ENCODE measurements at regions of chr17 and their contacts with region 1.

Region 1: DNA sequence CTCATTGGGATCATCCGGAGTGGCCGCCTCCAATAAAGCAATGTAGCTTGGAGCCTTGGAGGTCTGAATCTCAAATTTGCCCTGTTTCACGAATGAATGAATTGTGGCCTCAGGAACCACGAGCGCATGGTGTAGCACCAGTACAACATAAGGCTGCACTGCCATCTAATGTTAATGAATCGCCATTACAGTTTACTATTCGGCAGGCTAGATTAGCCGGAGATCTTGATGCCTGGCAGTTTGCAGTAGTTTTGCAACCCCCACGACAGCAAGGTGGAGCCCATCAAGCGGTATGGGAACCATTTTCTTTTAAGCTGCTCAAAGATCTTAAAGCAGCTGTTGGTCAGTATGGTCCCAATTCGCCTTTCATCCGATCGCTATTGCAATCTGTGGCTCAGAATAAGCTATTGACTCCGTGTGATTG is 18.8 kb downstream of the ALOX15B start:
- DNase-seq: peak; percentile 63
- ATAC-seq: peak; percentile 89
- H3K4me3 Mint-ChIP-seq: no peak overlapping the region
- H3K27ac Mint-ChIP-seq: no peak overlapping the region
- H3K4me1 Mint-ChIP-seq: peaks cover 4% of the 10 kb centered on the region
- H3K27me3 Mint-ChIP-seq: peaks cover 47% of the 10 kb centered on the region

Region 2: GRCh38 chr17:7745748-7746470 is 311.8 kb before region 1 on chr17:
- CTCF ChIA-PET with region 1: interaction called, 12 read pairs
- POLR2A ChIA-PET with region 1: no interaction called
- intact Hi-C with region 1: loop called (anchors 1 kb)
- DNase-seq: no peak
- ATAC-seq: no peak
- H3K4me3 Mint-ChIP-seq: no peak overlapping the region
- H3K27ac Mint-ChIP-seq: no peak overlapping the region
- H3K4me1 Mint-ChIP-seq: no peaks in the 10 kb centered on the region
- H3K27me3 Mint-ChIP-seq: peaks cover 3% of the 10 kb centered on the region

Region 3: DNA sequence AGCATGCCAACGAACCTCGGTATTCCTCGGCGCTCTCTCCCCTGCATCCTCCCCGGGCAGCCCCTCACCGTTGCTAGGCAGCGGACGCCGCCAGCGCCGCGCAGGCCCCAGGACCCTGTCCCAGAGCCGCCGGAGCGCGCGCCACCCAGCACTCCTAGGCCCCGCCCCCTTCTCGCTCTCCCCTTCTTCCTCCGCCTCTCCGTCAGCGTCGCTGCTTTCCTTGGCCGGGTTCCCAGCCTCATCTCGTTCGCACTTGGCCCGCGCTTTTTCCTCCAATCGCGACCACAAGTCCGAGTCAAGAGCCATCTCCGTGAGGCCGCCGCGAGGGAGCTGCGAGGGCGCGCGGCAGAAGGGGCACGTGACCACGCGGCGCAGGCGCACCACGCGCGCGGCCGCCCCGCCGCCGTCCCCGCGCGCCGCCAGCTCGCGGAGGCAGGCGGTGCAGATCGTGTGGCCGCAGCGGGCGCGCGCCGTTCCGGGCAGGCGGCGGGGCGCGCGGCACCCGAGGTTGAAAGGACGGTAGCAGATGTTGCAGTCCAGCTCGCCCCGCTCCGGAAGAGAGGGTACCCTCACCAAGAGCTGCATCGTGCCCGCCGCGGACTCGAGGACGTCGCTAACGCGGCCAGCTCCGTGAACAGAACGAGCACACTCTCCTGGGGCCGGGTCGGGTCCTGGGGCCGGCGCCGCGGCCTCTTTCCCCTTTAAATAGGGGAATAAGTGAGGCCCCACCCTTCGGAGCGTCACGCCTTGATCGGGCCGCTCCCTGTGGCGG is 141.9 kb before region 1 on chr17 and contains the start of gene RNF227:
- CTCF ChIA-PET with region 1: interaction called, 19 read pairs
- POLR2A ChIA-PET with region 1: no interaction called
- intact Hi-C with region 1: loop called (anchors 1 to 2 kb)
- DNase-seq: peak; percentile 95
- ATAC-seq: peak; percentile 88
- H3K4me3 Mint-ChIP-seq: peak within 1 kb of the TSS; percentile 86
- H3K27ac Mint-ChIP-seq: peak within 1 kb of the TSS; percentile 82
- H3K4me1 Mint-ChIP-seq: peaks cover 27% of the 10 kb centered on the region
- H3K27me3 Mint-ChIP-seq: no peaks in the 10 kb centered on the region
- total RNA-seq, gene RNF227: 3.8 to 5.6 TPM

Region 4: GRCh38 chr17:8041249-8041928 is 16.3 kb before region 1 on chr17:
- CTCF ChIA-PET with region 1: interaction called, 34 read pairs
- POLR2A ChIA-PET with region 1: no interaction called
- intact Hi-C with region 1: no loop called
- DNase-seq: peak; percentile 72
- ATAC-seq: peak; percentile 84
- H3K4me3 Mint-ChIP-seq: no peak overlapping the region
- H3K27ac Mint-ChIP-seq: no peak overlapping the region
- H3K4me1 Mint-ChIP-seq: no peaks in the 10 kb centered on the region
- H3K27me3 Mint-ChIP-seq: peaks cover 25% of the 10 kb centered on the region

Region 5: DNA sequence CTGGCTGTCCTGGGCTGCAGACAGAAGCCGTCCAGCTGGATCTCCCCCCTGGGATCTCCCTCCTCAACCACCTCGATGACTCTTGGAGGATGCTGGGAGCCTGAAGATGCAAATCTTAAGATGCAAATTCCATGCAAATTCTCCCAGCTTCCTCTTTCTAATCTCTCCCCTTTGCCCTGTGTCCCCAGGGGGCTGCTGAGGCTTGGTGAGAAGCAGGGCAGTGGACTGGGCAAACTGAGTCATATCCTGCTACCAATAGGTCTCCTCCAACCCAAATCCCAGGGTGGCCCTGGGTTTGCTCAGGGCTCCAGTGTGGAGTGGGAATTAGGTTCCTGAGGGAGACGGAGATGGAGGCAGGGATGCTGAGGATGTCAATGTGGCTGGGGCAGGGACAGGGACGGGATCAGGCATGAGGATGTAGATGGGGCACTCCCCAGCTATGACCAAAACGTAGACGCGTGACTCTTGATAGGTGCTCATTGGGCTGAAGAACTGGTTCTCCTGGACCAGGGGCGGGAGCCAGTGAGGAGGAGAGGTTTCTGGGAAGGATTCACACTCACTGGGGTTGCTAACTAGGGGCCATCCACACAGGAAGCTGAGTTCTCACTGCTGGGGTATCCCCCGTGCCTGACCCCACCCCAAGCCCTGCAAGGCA is 33.5 kb after region 1 on chr17:
- CTCF ChIA-PET with region 1: interaction called, 315 read pairs
- POLR2A ChIA-PET with region 1: no interaction called
- intact Hi-C with region 1: no loop called
- DNase-seq: no peak
- ATAC-seq: no peak
- H3K4me3 Mint-ChIP-seq: no peak overlapping the region
- H3K27ac Mint-ChIP-seq: no peak overlapping the region
- H3K4me1 Mint-ChIP-seq: peaks cover 14% of the 10 kb centered on the region
- H3K27me3 Mint-ChIP-seq: peaks cover 5% of the 10 kb centered on the region

Region 6: DNA sequence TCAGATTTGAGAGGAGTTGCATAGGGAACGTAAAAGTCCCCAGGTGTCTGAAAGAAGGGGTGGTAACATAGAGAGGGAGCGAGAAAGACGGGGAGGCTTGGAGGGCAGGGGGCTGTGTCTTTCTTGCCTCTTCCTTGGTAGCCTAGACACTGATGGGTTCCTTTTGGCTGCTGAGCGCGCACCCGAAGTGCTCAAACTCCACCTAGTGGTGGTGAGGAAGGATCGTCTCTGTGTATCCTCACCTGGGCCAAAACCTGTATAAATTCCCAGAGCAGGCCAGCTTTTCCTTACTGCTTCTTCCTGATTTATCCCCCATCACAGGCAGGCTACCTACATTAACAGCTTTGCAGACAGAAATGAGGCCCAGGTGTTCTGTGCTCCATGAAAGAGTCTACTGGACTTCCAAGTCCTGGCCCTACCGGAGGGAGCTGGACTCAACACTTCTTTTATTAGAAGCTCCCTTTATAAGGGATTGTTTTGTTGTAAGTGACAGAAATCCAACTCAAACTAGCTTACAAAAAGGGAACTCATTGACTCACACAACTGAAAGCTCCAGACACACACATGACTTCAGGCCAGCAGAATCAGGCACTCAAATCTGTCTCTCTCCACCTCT is 243.0 kb after region 1 on chr17:
- CTCF ChIA-PET with region 1: interaction called, 11 read pairs
- POLR2A ChIA-PET with region 1: no interaction called
- intact Hi-C with region 1: loop called (anchors 1 kb)
- DNase-seq: peak; percentile 76
- ATAC-seq: peak; percentile 97
- H3K4me3 Mint-ChIP-seq: peak overlapping the region; percentile 16
- H3K27ac Mint-ChIP-seq: peak overlapping the region; percentile 6
- H3K4me1 Mint-ChIP-seq: peaks cover 8% of the 10 kb centered on the region
- H3K27me3 Mint-ChIP-seq: no peaks in the 10 kb centered on the region